Activated CD8-positive, alpha-beta memory T cell treated with anti-CD3 and anti-CD28 coated beads, Interleukin-2, amount 10 ng/mL, durations not matched to agents 7 days and 5 days (primary cell): ENCODE measurements at regions of chr17 and their contacts with region 1.

Region 1: DNA sequence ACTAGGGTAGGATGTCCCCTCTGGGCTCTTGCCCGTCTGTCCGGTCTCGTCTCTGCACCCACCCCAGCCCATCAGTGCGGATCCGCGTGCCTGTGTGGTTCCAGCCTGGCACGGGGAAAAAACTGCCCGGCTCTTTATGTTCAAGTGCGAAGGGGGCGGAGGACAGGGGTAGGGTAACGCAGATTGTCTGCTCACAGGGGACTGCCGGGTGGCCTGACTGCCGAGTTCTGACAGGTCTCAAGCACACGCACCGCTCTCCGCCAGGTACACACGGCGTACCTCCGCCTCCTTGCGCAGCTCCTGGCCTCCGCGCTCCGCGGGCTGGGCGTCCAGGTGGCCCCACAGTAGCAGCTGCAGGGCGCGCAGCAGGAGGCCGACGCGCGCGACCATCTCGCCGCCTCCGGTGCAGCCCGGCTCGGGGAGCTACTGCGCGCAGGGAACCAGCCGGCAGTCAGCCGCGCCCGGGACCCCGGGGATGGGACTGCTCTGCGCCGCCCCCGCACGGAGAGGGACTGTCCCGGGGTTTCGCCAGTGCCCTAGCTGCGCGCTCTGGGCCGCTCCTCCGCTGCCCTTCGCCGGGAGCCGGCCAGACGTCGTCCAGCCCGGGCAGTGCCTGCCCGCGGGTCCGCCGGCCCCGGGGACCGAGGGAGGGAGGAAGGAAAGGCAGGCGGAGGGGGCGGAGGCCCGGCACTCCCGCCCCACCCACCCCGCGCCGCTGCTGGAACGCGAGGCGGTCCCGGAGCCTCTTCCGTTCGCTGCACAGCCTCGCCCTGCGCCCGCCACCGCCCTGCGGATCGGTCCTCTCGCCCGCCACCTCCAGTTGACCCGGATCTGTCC is at the start of gene MMP28:
- DNase-seq: peak; percentile 52
- ATAC-seq: peak; percentile 88
- H3K4me3 Mint-ChIP-seq: peak within 1 kb of the TSS; percentile 62
- H3K27ac Mint-ChIP-seq: no peak within 1 kb of the TSS
- H3K4me1 Mint-ChIP-seq: peaks cover 15% of the 10 kb centered on the region
- H3K27me3 Mint-ChIP-seq: peaks cover 73% of the 10 kb centered on the region
- total RNA-seq, gene MMP28: not detected

Region 2: GRCh38 chr17:35780951-35781350 is 14.3 kb before region 1 on chr17:
- CTCF ChIA-PET with region 1: interaction called, 15 read pairs
- DNase-seq: no peak
- ATAC-seq: no peak
- H3K4me3 Mint-ChIP-seq: no peak overlapping the region
- H3K27ac Mint-ChIP-seq: no peak overlapping the region
- H3K4me1 Mint-ChIP-seq: no peaks in the 10 kb centered on the region
- H3K27me3 Mint-ChIP-seq: peaks cover 53% of the 10 kb centered on the region

Region 3: GRCh38 chr17:35808962-35809854 is 14.0 kb after region 1 on chr17 and contains the start of gene TAF15:
- CTCF ChIA-PET with region 1: interaction called, 21 read pairs
- DNase-seq: peak; percentile 98
- ATAC-seq: peak; percentile 92
- H3K4me3 Mint-ChIP-seq: peak within 1 kb of the TSS; percentile 92
- H3K27ac Mint-ChIP-seq: peak within 1 kb of the TSS; percentile 93
- H3K4me1 Mint-ChIP-seq: peaks cover 62% of the 10 kb centered on the region
- H3K27me3 Mint-ChIP-seq: no peaks in the 10 kb centered on the region
- total RNA-seq, gene TAF15: 333 to 366 TPM